ENCODE measurements at regions of chr3 and their contacts with region 1.

Region 1: DNA sequence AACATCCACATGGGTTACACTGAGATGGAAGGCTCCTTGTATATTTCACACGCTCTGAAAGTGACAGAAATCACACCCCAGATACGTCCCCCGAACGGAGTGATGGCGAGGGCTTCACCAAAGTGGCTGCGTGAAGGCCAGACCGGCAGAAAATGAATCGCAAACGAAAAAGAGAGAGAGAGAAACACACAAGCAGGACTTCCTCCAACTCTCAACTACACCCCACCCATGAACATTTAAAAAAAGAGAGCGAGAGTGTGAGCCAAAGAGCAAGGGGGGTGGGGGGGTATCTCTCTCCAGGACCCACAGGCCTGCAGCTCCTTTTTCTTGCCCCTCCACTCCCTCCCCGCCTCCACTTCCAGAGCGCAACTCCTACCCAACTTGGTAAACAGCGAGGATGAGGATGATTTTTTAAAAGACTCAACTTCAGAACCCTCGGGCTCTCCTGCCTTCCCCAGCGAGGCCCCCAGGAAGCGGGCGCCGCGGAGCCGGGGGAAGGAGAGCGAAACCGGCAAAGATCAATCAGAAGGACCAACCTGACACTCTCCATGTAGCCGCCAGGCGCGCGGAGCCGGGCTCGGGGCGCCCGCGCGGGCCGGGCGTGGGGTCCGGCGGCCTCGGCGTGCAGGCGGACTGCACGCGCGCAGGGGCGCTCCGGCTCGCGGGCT is 519.1 kb downstream of the FOXP1 start:
- DNase-seq: peak; percentile 59
- H3K4me3 Mint-ChIP-seq: no peak overlapping the region
- H3K27ac Mint-ChIP-seq: no peak overlapping the region
- H3K4me1 Mint-ChIP-seq: peaks cover 39% of the 10 kb centered on the region
- H3K27me3 Mint-ChIP-seq: no peaks in the 10 kb centered on the region

Region 2: GRCh38 chr3:71360764-71361163 is 296.3 kb after region 1 on chr3:
- intact Hi-C with region 1: loop called (anchors 1 kb)
- DNase-seq: no peak
- H3K4me3 Mint-ChIP-seq: no peak overlapping the region
- H3K27ac Mint-ChIP-seq: peak overlapping the region; percentile 80
- H3K4me1 Mint-ChIP-seq: peaks cover 19% of the 10 kb centered on the region
- H3K27me3 Mint-ChIP-seq: peaks cover 25% of the 10 kb centered on the region

Region 3: GRCh38 chr3:71495708-71496472 is 431.5 kb after region 1 on chr3:
- intact Hi-C with region 1: loop called (anchors 5 kb)
- DNase-seq: peak; percentile 4
- H3K4me3 Mint-ChIP-seq: peak overlapping the region; percentile 22
- H3K27ac Mint-ChIP-seq: peak overlapping the region; percentile 40
- H3K4me1 Mint-ChIP-seq: peaks cover 57% of the 10 kb centered on the region
- H3K27me3 Mint-ChIP-seq: peaks cover 6% of the 10 kb centered on the region

Region 4: GRCh38 chr3:72847751-72848702 is 1783.6 kb after region 1 on chr3 and contains the start of gene SHQ1:
- intact Hi-C with region 1: loop called (anchors 10 kb)
- DNase-seq: peak; percentile 92
- H3K4me3 Mint-ChIP-seq: peak within 1 kb of the TSS; percentile 99
- H3K27ac Mint-ChIP-seq: peak within 1 kb of the TSS; percentile 88
- H3K4me1 Mint-ChIP-seq: peaks cover 62% of the 10 kb centered on the region
- H3K27me3 Mint-ChIP-seq: peaks cover 9% of the 10 kb centered on the region
- total RNA-seq, gene SHQ1: 46.1 and 48.5 TPM in 2 replicates

Measured in activated T-helper 1 cell treated with anti-CD3 and anti-CD28 coated beads, Interleukin-12 subunit alpha, Interleukin-12 subunit beta, Interleukin-2, Interleukin-4 antibody, amounts not matched to agents 30 ng/mL and 10 ng/mL and 1 ng/mL, durations not matched to agents 14 hours and 24 hours and 36 hours (primary cell).